ENCODE measurements at regions of chr19 and their contacts with region 1.

Region 1: DNA sequence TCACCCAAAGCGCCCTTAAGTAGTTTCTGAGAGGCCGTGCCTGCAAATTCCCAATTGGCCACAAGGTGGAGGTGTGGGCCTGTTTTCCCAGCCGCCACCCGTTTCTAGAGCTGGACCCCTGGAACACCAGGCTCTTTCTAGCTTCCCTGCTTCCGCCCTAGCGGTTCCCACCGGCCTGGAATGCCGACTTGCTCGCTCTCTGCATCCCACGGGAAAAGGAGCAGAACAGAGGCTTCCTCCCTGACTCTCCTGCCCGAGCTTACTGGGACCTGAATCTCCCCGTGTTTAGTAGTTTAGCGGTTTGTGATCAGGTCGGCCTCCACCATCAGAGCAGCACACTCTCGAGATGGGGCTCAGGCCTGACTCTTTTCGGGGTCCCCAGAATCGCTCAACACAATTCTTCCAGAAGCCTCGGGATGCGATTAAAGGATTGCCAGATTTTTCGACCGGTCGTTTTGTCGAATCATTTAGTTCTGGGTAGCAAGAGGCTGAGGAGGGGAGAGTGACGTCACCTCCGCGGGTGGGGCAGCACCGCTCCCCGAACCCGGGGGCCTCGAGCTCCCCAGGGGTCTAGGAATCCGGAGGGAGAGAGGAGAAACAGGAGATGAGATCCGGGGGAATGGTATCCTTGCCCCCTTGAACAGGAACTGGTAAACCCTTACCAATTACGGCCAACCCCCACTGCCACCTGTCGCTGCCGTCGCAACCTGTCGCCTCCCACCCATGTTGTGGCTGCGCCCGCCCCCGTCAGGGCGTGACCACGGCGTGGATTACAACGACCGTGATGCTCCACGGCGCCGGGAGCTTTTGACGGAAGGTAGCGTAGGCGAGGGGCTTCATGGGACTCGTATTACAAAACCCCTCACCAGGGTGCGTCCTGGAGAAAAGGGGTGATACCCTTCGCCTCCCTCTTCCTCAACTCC is 8.0 kb downstream of the NAPSA start:
- DNase-seq: peak; percentile 68 to 82
- ATAC-seq: peak; percentile 84 to 89
- H3K4me3 ChIP-seq: peak overlapping the region; percentile 48
- H3K27ac ChIP-seq: peak overlapping the region; percentile 73 to 79
- H3K4me1 ChIP-seq: no peaks in the 10 kb centered on the region
- CTCF ChIP-seq: peak; percentile 90
- EP300 ChIP-seq: no peak
- POLR2A ChIP-seq: no peak
- RAD21 ChIP-seq: peak; percentile 90 to 93

Region 2: GRCh38 chr19:50341091-50341564 is 16.3 kb before region 1 on chr19:
- CTCF ChIA-PET with region 1: interaction called, 27 read pairs
- POLR2A ChIA-PET with region 1: no interaction called
- DNase-seq: no peak
- ATAC-seq: no peak
- H3K4me3 ChIP-seq: no peak overlapping the region
- H3K27ac ChIP-seq: no peak overlapping the region
- H3K4me1 ChIP-seq: no peaks in the 10 kb centered on the region
- CTCF ChIP-seq: no peak
- EP300 ChIP-seq: no peak
- POLR2A ChIP-seq: no peak
- RAD21 ChIP-seq: no peak

Region 3: GRCh38 chr19:50376166-50377050 is 19.0 kb after region 1 on chr19 and contains the start of gene NR1H2:
- CTCF ChIA-PET with region 1: interaction called, 53 read pairs
- POLR2A ChIA-PET with region 1: no interaction called
- DNase-seq: peak; percentile 97 to 100
- ATAC-seq: peak; percentile 82 to 93
- H3K4me3 ChIP-seq: peak within 1 kb of the TSS; percentile 79
- H3K27ac ChIP-seq: peak within 1 kb of the TSS; percentile 97
- H3K4me1 ChIP-seq: peaks cover 9% of the 10 kb centered on the region; the same call in 1 of the 3 replicates
- CTCF ChIP-seq: no peak
- EP300 ChIP-seq: no peak
- POLR2A ChIP-seq: peak; percentile 20; the same call in 1 of the 2 replicates
- RAD21 ChIP-seq: no peak
- polyA plus RNA-seq, gene NR1H2: 39.2 and 39.3 TPM in 2 replicates

Region 4: DNA sequence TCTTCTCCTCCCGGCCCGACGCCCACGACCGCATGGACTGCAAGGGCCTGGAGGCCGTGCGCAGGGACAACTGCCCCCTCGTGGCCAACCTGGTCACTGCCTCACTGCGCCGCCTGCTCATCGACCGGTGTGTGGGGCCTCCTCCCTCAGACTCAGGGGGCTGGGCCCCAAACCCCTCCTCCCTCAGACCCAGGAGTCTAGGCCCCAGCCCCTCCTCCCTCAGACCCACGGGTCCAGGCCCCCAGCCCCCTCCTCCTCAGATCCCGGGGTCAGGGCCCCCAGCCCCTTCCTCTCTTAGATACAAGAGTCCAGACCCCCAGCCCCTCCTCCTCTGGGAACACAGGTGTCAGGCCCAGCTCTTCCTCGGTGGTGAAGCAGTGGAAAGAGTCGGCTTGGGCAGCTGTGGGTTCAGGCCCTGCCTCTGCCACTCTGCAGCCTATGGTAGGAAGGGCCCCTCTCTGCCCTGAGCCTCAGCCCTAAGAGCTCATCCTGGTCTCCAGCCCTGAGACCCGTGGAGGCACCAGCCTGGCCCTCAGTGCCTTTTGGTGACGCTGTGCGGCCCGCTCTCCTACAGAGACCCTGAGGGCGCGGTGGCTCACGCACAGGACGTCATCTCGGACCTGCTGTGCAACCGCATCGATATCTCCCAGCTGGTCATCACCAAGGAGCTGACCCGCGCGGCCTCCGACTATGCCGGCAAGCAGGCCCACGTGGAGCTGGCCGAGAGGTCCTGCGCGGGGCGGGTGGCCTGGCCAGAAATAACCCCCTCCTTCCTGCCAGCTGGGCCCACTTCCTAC is 57.6 kb after region 1 on chr19:
- CTCF ChIA-PET with region 1: interaction called, 12 read pairs
- POLR2A ChIA-PET with region 1: no interaction called
- DNase-seq: peak; percentile 86 to 89
- ATAC-seq: peak; percentile 67 to 89
- H3K4me3 ChIP-seq: no peak overlapping the region
- H3K27ac ChIP-seq: no peak overlapping the region
- H3K4me1 ChIP-seq: no peaks in the 10 kb centered on the region
- CTCF ChIP-seq: peak; percentile 82
- EP300 ChIP-seq: no peak
- POLR2A ChIP-seq: no peak
- RAD21 ChIP-seq: peak; percentile 52 to 59; a peak in 4 of 5 replicates

Region 5: GRCh38 chr19:50516964-50517703 is 159.7 kb after region 1 on chr19:
- CTCF ChIA-PET with region 1: no interaction called
- POLR2A ChIA-PET with region 1: no interaction called
- DNase-seq: peak in 1 of 2 experiments; percentile 47
- ATAC-seq: peak in 1 of 2 experiments; percentile 7; a peak in 3 of 6 replicates
- H3K4me3 ChIP-seq: peak overlapping the region; percentile 13; the same call in 1 of the 3 replicates
- H3K27ac ChIP-seq: peak overlapping the region; percentile 5 to 59; a peak in 3 of 6 replicates
- H3K4me1 ChIP-seq: peaks cover 10% of the 10 kb centered on the region; the same call in 1 of the 3 replicates
- CTCF ChIP-seq: no peak
- EP300 ChIP-seq: no peak
- POLR2A ChIP-seq: no peak
- RAD21 ChIP-seq: no peak

Region 6: DNA sequence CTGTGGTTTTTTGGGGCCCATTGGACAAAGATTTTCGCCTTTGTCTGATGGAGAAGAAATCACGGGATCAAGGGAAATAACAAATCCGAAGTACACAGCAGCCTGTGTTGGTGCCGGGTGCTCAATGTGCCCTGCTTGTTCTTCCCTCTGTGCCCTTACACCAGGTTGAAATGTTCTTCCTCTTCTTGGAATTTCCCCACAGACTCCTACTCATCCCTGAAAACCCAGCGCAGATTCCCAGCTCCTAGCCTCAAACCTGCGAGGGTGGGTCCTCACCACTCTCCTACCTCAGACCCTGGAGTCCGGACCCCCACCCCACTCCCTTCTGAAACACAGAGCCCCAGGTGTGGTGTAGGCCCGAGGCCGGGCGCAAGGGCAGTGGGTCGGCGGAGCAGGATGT is 427.9 kb after region 1 on chr19:
- CTCF ChIA-PET with region 1: interaction called, 11 read pairs
- POLR2A ChIA-PET with region 1: no interaction called
- DNase-seq: no peak
- ATAC-seq: no peak
- H3K4me3 ChIP-seq: no peak overlapping the region
- H3K27ac ChIP-seq: no peak overlapping the region
- H3K4me1 ChIP-seq: peaks cover 7% of the 10 kb centered on the region; the same call in 2 of the 3 replicates
- CTCF ChIP-seq: no peak
- EP300 ChIP-seq: no peak
- POLR2A ChIP-seq: no peak
- RAD21 ChIP-seq: no peak

Measured in A549 (cell line).